H1 (cell line): ENCODE measurements at regions of chr2 and their contacts with region 1.

Region 1: GRCh38 chr2:108637304-108637669 is 82.0 kb upstream of the RANBP2 start:
- DNase-seq: no peak
- H3K4me3 ChIP-seq: no peak overlapping the region
- H3K27ac ChIP-seq: no peak overlapping the region
- H3K4me1 ChIP-seq: peaks cover 0 to 8% (median 3%) of the 10 kb centered on the region in 4 experiments; a peak in 3 of 7 replicates
- H3K27me3 ChIP-seq: no peaks in the 10 kb centered on the region
- CTCF ChIP-seq: no peak
- EP300 ChIP-seq: no peak
- POLR2A ChIP-seq: no peak
- RAD21 ChIP-seq: no peak

Region 2: GRCh38 chr2:108124736-108125495 is 512.4 kb before region 1 on chr2:
- CTCF ChIA-PET with region 1: no interaction called
- POLR2A ChIA-PET with region 1: no interaction called
- DNase-seq: no peak
- H3K4me3 ChIP-seq: no peak overlapping the region
- H3K27ac ChIP-seq: no peak overlapping the region
- H3K4me1 ChIP-seq: peaks cover 0 to 5% (median 2%) of the 10 kb centered on the region in 4 experiments; a peak in 2 of 7 replicates
- H3K27me3 ChIP-seq: no peaks in the 10 kb centered on the region
- CTCF ChIP-seq: no peak
- EP300 ChIP-seq: no peak
- POLR2A ChIP-seq: no peak
- RAD21 ChIP-seq: no peak

Region 3: GRCh38 chr2:108351889-108352288 is 285.4 kb before region 1 on chr2:
- CTCF ChIA-PET with region 1: interaction called, 11 read pairs
- POLR2A ChIA-PET with region 1: no interaction called
- DNase-seq: no peak
- H3K4me3 ChIP-seq: no peak overlapping the region; a peak in 1 of 8 replicates
- H3K27ac ChIP-seq: no peak overlapping the region
- H3K4me1 ChIP-seq: peaks cover 0 to 2% (median 0%) of the 10 kb centered on the region in 4 experiments; a peak in 2 of 7 replicates
- H3K27me3 ChIP-seq: no peaks in the 10 kb centered on the region
- CTCF ChIP-seq: no peak
- EP300 ChIP-seq: no peak
- POLR2A ChIP-seq: no peak
- RAD21 ChIP-seq: no peak

Region 4: DNA sequence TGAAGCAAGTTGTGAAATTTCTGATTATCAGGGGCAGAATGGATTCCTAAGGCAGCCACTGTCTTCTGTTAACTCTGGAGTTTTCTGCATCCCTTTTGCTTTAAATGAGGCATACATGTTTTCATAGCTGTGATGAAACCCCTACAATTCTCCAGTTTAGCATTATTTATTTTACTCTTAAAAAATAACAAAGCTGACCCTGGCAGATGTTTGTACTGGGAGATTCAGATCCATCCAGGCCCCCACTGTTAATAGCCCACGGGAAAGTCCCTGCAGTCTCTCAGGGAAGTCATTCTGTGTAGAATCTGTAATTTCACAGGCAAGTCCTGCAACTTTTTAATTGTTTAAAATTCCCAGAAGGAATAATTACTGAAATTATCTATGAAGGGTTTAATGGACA is 259.9 kb before region 1 on chr2:
- CTCF ChIA-PET with region 1: no interaction called
- POLR2A ChIA-PET with region 1: no interaction called
- DNase-seq: no peak
- H3K4me3 ChIP-seq: no peak overlapping the region
- H3K27ac ChIP-seq: no peak overlapping the region; the same call in 1 of the 2 replicates
- H3K4me1 ChIP-seq: peaks cover 0 to 10% (median 10%) of the 10 kb centered on the region in 4 experiments; a peak in 5 of 7 replicates
- H3K27me3 ChIP-seq: no peaks in the 10 kb centered on the region; a peak in 1 of 7 replicates
- CTCF ChIP-seq: no peak
- EP300 ChIP-seq: no peak
- POLR2A ChIP-seq: no peak
- RAD21 ChIP-seq: no peak

Region 5: GRCh38 chr2:108575132-108575966 is 61.9 kb before region 1 on chr2:
- CTCF ChIA-PET with region 1: interaction called, 26 read pairs
- POLR2A ChIA-PET with region 1: no interaction called
- DNase-seq: no peak
- H3K4me3 ChIP-seq: no peak overlapping the region
- H3K27ac ChIP-seq: no peak overlapping the region
- H3K4me1 ChIP-seq: peaks cover 0 to 6% (median 6%) of the 10 kb centered on the region in 4 experiments; a peak in 5 of 7 replicates
- H3K27me3 ChIP-seq: no peaks in the 10 kb centered on the region
- CTCF ChIP-seq: no peak
- EP300 ChIP-seq: no peak
- POLR2A ChIP-seq: no peak
- RAD21 ChIP-seq: no peak

Region 6: DNA sequence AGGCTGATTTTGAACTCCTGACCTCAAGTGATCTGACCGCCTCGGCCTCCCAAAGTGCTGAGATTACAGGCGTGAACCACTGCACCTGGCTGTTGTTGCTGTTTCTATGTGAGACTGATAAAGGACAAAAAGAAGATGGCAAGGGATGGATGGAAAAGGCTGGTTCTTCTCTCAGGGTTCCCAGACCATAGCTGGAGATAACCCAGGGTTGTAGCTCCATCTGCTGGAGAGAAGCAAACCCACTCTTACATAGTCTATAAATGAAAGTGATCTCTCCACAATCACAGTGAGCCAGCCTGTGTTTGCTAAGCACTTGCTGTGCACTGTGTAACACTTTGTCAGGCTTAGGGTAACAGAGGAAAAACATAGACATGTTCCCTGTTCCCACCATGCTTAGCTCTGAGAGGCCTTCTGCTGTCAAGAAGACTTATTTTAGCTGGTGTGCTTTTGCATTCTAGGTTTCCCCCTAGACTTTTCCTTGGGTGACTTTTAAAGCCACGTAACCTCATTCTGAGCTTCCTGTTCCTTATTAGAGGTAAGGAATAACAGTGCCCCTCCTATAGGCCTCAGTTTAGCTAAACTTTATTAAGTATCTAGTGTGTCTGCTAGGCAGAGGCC is 53.3 kb before region 1 on chr2:
- CTCF ChIA-PET with region 1: interaction called, 54 read pairs
- POLR2A ChIA-PET with region 1: no interaction called
- DNase-seq: no peak
- H3K4me3 ChIP-seq: no peak overlapping the region
- H3K27ac ChIP-seq: no peak overlapping the region
- H3K4me1 ChIP-seq: peaks cover 0 to 4% (median 3%) of the 10 kb centered on the region in 4 experiments; a peak in 4 of 7 replicates
- H3K27me3 ChIP-seq: no peaks in the 10 kb centered on the region
- CTCF ChIP-seq: peak in 2 of 3 experiments; percentile 72 to 82; a peak in 3 of 4 replicates
- EP300 ChIP-seq: no peak
- POLR2A ChIP-seq: no peak
- RAD21 ChIP-seq: peak; percentile 97

Region 7: DNA sequence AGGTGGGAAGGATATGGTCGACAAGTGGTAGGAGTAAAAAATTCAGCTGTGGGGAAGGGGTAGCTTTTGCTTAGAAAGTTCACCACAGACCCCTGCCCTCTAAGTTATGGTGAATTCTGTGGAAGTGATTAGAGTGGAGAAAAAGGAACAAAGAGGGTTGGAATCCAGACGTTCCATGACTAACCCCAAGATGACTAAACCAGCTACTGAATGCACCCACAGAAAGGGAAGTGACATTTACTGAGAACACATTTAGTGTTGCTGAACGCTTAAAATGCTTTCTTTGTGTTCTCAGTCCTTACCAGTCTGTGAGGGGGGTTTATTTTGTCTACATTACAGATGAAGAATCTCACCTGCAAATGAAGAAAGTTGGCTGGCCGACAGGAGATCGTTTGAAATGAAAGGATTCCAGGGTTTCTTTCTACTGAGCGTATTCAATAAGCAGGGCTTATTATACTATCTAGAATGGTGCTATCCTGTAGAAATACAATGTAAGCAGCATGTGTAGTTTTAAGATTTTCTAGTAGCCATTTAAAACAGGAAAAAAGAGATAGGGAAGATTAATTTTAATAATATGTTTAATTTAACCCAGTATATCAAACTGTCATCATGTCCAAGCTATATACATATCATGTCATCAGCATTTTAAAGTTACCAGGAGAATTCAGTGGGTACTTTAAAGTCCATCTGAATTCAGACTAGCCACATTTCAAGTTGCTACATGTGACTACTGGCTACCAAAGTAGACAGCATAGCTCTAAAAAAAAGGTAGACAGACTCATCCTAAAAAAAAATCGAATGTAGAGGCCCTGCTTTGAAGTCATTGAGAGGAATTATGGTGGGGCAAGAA is 42.9 kb before region 1 on chr2:
- CTCF ChIA-PET with region 1: interaction called, 22 read pairs
- POLR2A ChIA-PET with region 1: no interaction called
- DNase-seq: no peak
- H3K4me3 ChIP-seq: no peak overlapping the region
- H3K27ac ChIP-seq: no peak overlapping the region
- H3K4me1 ChIP-seq: peaks cover 0 to 7% (median 4%) of the 10 kb centered on the region in 4 experiments; a peak in 3 of 7 replicates
- H3K27me3 ChIP-seq: no peaks in the 10 kb centered on the region
- CTCF ChIP-seq: no peak
- EP300 ChIP-seq: no peak
- POLR2A ChIP-seq: no peak
- RAD21 ChIP-seq: no peak

Region 8: GRCh38 chr2:108607706-108608301 is 29.5 kb before region 1 on chr2:
- CTCF ChIA-PET with region 1: interaction called, 109 read pairs
- POLR2A ChIA-PET with region 1: no interaction called
- DNase-seq: no peak
- H3K4me3 ChIP-seq: no peak overlapping the region
- H3K27ac ChIP-seq: no peak overlapping the region
- H3K4me1 ChIP-seq: peaks cover 0 to 9% (median 1%) of the 10 kb centered on the region in 4 experiments; a peak in 1 of 7 replicates
- H3K27me3 ChIP-seq: no peaks in the 10 kb centered on the region
- CTCF ChIP-seq: peak in 2 of 3 experiments; percentile 65 to 74; a peak in 3 of 4 replicates
- EP300 ChIP-seq: no peak
- POLR2A ChIP-seq: no peak
- RAD21 ChIP-seq: peak; percentile 70 to 80

Region 9: GRCh38 chr2:108621087-108621559 is 16.2 kb before region 1 on chr2:
- CTCF ChIA-PET with region 1: interaction called, 167 read pairs
- POLR2A ChIA-PET with region 1: interaction called, 4 read pairs
- DNase-seq: peak; percentile 31 to 58
- H3K4me3 ChIP-seq: peak overlapping the region in 2 of 4 experiments; percentile 8 to 49; a peak in 4 of 8 replicates
- H3K27ac ChIP-seq: peak overlapping the region; percentile 35
- H3K4me1 ChIP-seq: peaks cover 0 to 16% (median 12%) of the 10 kb centered on the region in 4 experiments; a peak in 6 of 7 replicates
- H3K27me3 ChIP-seq: no peaks in the 10 kb centered on the region
- CTCF ChIP-seq: no peak
- EP300 ChIP-seq: no peak
- POLR2A ChIP-seq: peak in 1 of 2 experiments; percentile 44; a peak in 2 of 3 replicates
- RAD21 ChIP-seq: no peak